CD4-positive, alpha-beta T cell (primary cell): ENCODE measurements at regions of chr10 and their contacts with region 1.

Region 1: DNA sequence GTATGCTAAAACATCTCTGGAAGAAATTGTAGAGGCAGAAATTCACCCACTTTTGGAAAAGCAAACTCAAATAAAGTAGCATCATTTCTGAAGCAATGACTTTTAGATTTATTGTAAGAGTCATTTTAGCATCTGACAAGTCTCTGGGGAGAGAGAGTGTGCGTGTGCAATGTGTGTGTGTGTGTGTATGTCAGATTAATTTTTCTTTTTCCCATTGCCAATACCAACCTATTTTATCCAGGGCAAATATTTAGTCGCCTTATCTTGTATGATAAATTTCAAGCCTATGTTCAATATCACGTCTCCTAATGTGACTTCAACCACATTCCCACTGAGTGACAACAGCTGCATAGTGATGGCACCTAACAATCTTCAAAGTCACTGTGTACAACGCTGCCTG is 101.7 kb downstream of the NEBL start:
- DNase-seq: no peak
- ATAC-seq: no peak
- H3K4me3 ChIP-seq: no peak overlapping the region
- H3K4me3 Mint-ChIP-seq: no peak overlapping the region
- H3K27ac ChIP-seq: no peak overlapping the region
- H3K27ac Mint-ChIP-seq: no peak overlapping the region
- H3K4me1 ChIP-seq: no peaks in the 10 kb centered on the region
- H3K4me1 Mint-ChIP-seq: no peaks in the 10 kb centered on the region
- H3K27me3 ChIP-seq: no peaks in the 10 kb centered on the region
- H3K27me3 Mint-ChIP-seq: no peaks in the 10 kb centered on the region
- CTCF ChIP-seq: no peak

Region 2: GRCh38 chr10:20714979-20715378 is 80.4 kb before region 1 on chr10:
- CTCF ChIA-PET with region 1: no interaction called
- POLR2A ChIA-PET with region 1: no interaction called
- intact Hi-C with region 1: loop called in 1 of 2 experiments (anchors 2 kb)
- DNase-seq: no peak
- ATAC-seq: no peak
- H3K4me3 ChIP-seq: no peak overlapping the region
- H3K4me3 Mint-ChIP-seq: no peak overlapping the region
- H3K27ac ChIP-seq: no peak overlapping the region
- H3K27ac Mint-ChIP-seq: no peak overlapping the region
- H3K4me1 ChIP-seq: no peaks in the 10 kb centered on the region
- H3K4me1 Mint-ChIP-seq: no peaks in the 10 kb centered on the region
- H3K27me3 ChIP-seq: no peaks in the 10 kb centered on the region
- H3K27me3 Mint-ChIP-seq: no peaks in the 10 kb centered on the region
- CTCF ChIP-seq: no peak